AG04449 (cell line): ENCODE measurements at regions of chr12 and their contacts with region 1.

Region 1: GRCh38 chr12:46124848-46125619 is 134.7 kb upstream of the SCAF11 start:
- DNase-seq: peak; percentile 53
- H3K4me3 ChIP-seq: no peak overlapping the region
- CTCF ChIP-seq: peak; percentile 63

Region 2: GRCh38 chr12:46108721-46109120 is 16.3 kb before region 1 on chr12:
- CTCF ChIA-PET with region 1: interaction called, 29 read pairs
- POLR2A ChIA-PET with region 1: no interaction called
- DNase-seq: no peak
- H3K4me3 ChIP-seq: no peak overlapping the region
- CTCF ChIP-seq: no peak

Region 3: DNA sequence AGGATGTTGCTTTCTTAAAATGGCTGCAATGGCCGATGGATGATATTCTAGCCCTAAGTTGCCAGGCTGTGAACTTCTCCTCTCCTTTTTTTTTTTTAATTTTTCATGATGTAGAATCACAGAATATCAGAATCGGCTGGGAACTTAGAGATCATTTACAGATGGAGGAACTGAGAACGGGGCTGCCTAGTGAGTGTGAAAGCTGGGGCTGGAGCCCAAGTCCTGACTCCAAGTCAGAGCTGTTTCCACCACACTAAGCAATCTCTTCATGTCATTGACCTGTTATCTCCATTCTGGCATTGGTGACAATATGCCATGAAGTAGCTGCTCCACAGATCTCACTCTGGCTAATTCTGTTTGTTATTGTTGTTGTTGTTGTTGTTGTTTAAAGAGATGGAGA is 22.1 kb after region 1 on chr12:
- CTCF ChIA-PET with region 1: interaction called, 14 read pairs
- POLR2A ChIA-PET with region 1: no interaction called
- DNase-seq: no peak
- H3K4me3 ChIP-seq: no peak overlapping the region
- CTCF ChIP-seq: no peak

Region 4: GRCh38 chr12:46357438-46358324 is 232.6 kb after region 1 on chr12:
- CTCF ChIA-PET with region 1: interaction called, 11 read pairs
- POLR2A ChIA-PET with region 1: interaction called, 11 read pairs
- DNase-seq: peak; percentile 75
- H3K4me3 ChIP-seq: no peak overlapping the region
- CTCF ChIP-seq: no peak